Psoas muscle (tissue), 8 donors: ENCODE measurements at regions of chr3 and their contacts with region 1.

Region 1: GRCh38 chr3:171646357-171647133 is 163.7 kb downstream of the PLD1 start:
- DNase-seq: no peak
- ATAC-seq: peak; percentile 53 to 84 (median 68)
- H3K4me3 ChIP-seq: no peak overlapping the region
- H3K27ac ChIP-seq: no peak overlapping the region
- H3K4me1 ChIP-seq: no peaks in the 10 kb centered on the region
- H3K27me3 ChIP-seq: no peaks in the 10 kb centered on the region
- CTCF ChIP-seq: peak; percentile 69

Region 2: GRCh38 chr3:171068658-171069057 is 577.9 kb before region 1 on chr3:
- intact Hi-C with region 1: no loop called
- DNase-seq: no peak
- ATAC-seq: no peak
- H3K4me3 ChIP-seq: no peak overlapping the region
- H3K27ac ChIP-seq: no peak overlapping the region
- H3K4me1 ChIP-seq: no peaks in the 10 kb centered on the region
- H3K27me3 ChIP-seq: no peaks in the 10 kb centered on the region
- CTCF ChIP-seq: no peak

Region 3: DNA sequence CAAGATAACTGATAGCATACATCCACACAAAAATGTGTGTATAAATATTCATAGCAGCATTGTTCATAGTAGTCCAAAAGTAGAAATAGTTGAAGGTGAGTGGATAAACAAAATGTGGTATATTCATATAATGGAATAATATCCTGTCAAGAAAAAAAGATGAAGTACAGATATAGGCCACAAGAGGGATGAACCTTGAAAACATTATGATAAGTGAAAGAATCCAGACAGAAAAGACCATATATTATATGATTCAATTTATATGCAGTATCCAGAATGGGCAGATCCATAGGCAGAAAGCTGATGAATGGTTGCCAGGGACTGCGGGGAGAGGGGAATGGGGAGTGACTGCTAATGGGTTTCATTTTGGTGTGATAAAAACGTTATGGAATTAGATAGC is 132.1 kb before region 1 on chr3:
- intact Hi-C with region 1: no loop called
- DNase-seq: no peak
- ATAC-seq: no peak
- H3K4me3 ChIP-seq: no peak overlapping the region
- H3K27ac ChIP-seq: no peak overlapping the region
- H3K4me1 ChIP-seq: no peaks in the 10 kb centered on the region
- H3K27me3 ChIP-seq: no peaks in the 10 kb centered on the region
- CTCF ChIP-seq: no peak

Region 4: DNA sequence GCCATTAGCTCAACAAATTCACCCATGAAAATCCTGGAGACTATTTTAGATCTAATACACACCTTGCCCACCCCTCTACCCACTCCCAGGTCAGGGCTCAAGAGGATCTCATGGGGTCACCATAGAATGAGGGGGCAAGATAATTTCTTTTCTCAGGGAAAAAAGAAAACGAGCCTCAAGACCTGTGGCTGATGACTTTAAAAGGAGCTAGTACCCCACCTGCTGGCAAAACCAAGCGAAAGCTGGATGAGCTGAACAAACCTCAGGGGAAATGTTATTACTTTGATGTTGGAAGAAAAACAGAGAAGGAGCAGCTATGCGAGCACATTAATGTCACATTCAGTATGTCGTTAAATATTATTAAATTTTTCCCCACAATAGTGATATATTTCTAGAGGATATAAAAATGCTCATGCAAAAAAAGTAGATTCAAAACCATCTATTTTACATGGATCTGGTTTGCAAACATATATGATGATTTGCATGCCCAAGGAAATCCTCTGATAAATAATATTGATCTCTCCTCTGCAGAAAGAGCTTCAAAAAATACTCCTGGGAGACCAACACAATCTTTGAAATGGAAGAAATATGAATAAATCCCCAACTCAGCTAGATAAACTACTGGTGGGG is 126.0 kb after region 1 on chr3:
- intact Hi-C with region 1: loop called (anchors 2 to 5 kb)
- DNase-seq: peak; percentile 38 to 67
- ATAC-seq: peak in 3 of 4 donors; percentile 51 to 76 (median 56)
- H3K4me3 ChIP-seq: no peak overlapping the region
- H3K27ac ChIP-seq: no peak overlapping the region
- H3K4me1 ChIP-seq: peaks cover 3% of the 10 kb centered on the region
- H3K27me3 ChIP-seq: no peaks in the 10 kb centered on the region
- CTCF ChIP-seq: peak; percentile 77

Region 5: DNA sequence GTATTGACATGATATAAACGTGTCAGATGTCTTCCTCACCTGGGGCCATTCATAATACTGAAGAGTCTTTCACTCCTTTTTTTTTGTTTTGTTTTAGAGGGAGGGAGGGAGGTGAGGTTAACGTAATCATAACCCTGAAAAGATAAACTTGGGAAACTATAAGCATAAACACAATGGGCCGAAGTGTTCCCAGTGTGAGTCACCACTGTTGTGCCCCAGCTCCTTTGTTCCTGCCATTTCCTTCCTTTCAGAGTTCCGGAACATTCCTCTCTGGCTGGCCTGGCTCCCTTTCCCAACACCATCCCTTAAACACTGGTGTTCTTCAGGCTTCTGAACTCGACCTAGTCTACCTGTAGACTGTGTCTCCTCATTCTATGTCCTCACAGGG is 145.1 kb after region 1 on chr3:
- intact Hi-C with region 1: no loop called
- DNase-seq: no peak
- ATAC-seq: no peak
- H3K4me3 ChIP-seq: no peak overlapping the region
- H3K27ac ChIP-seq: no peak overlapping the region
- H3K4me1 ChIP-seq: no peaks in the 10 kb centered on the region
- H3K27me3 ChIP-seq: no peaks in the 10 kb centered on the region
- CTCF ChIP-seq: no peak

Region 6: DNA sequence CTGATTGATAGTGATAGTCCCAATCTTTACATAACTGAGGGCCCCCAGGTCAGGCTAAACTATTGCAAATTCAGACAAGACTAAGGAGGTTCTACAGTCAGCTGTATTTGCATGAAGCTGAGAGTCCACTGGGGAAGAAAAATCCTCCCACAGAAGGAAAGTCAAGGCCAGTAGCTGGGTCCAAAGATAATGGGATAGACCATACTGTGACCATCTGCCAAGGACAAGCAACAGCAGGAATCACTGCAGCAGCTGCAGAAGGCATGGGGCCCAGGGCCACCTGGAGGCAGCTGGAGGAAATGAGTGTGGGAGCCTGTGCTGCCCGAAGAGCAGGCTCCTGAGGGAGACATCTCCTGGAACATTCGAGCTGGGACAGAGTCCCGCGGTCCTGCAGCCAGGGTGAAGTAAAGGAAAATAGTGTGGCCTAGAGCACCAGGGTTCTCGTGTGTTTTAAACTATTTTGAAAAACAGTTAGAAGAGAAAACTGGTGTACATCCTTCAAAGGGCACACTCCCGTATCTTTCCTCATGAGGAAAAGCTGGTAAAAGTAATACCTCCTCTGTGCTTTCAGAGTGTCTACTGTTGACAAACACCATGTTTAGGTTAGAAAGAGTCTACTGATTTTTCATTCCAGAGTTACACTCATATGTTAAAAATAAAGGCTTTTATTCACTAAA is 183.4 kb after region 1 on chr3:
- intact Hi-C with region 1: loop called (anchors 2 to 10 kb)
- DNase-seq: peak; percentile 76 to 85
- ATAC-seq: peak; percentile 71 to 85 (median 78)
- H3K4me3 ChIP-seq: no peak overlapping the region
- H3K27ac ChIP-seq: no peak overlapping the region
- H3K4me1 ChIP-seq: peaks cover 15% of the 10 kb centered on the region
- H3K27me3 ChIP-seq: no peaks in the 10 kb centered on the region
- CTCF ChIP-seq: peak; percentile 48

Region 7: DNA sequence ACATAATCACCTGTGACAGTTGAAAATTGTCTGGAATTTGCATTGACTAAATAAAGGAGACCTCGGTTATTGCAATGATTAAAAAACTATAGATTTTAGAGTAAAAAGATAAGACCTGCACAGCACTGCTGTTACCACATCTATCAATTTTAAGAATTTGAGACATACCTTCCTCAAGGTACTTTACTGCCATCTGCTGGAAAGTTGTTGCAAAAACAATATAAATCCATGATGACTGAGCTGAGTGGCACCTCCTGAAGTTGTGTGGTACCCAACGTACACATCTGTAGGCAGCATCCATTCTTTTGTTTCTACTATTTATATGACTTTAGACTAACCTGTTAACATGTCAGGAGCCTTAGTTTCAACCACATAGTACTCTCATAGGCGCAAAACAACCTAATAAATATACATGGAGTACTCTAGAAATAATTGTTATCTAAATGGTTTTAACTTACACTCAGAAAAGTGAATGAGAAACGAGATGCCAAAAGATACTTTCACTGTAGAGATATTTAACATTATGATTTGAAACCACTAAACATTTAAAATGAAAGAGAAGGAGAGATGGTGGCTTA is 695.0 kb after region 1 on chr3:
- intact Hi-C with region 1: loop called in 1 of 2 experiments (anchors 5 kb)
- DNase-seq: no peak
- ATAC-seq: peak; percentile 60 to 79 (median 75)
- H3K4me3 ChIP-seq: no peak overlapping the region
- H3K27ac ChIP-seq: no peak overlapping the region
- H3K4me1 ChIP-seq: no peaks in the 10 kb centered on the region
- H3K27me3 ChIP-seq: no peaks in the 10 kb centered on the region
- CTCF ChIP-seq: peak; percentile 64

Region 8: GRCh38 chr3:172476347-172476746 is 829.8 kb after region 1 on chr3:
- intact Hi-C with region 1: loop called in 1 of 2 experiments (anchors 10 kb)
- DNase-seq: no peak
- ATAC-seq: no peak
- H3K4me3 ChIP-seq: peak overlapping the region; percentile 55
- H3K27ac ChIP-seq: no peak overlapping the region
- H3K4me1 ChIP-seq: no peaks in the 10 kb centered on the region
- H3K27me3 ChIP-seq: no peaks in the 10 kb centered on the region
- CTCF ChIP-seq: no peak